ENCODE measurements at regions of chr11 and their contacts with region 1.

Region 1: DNA sequence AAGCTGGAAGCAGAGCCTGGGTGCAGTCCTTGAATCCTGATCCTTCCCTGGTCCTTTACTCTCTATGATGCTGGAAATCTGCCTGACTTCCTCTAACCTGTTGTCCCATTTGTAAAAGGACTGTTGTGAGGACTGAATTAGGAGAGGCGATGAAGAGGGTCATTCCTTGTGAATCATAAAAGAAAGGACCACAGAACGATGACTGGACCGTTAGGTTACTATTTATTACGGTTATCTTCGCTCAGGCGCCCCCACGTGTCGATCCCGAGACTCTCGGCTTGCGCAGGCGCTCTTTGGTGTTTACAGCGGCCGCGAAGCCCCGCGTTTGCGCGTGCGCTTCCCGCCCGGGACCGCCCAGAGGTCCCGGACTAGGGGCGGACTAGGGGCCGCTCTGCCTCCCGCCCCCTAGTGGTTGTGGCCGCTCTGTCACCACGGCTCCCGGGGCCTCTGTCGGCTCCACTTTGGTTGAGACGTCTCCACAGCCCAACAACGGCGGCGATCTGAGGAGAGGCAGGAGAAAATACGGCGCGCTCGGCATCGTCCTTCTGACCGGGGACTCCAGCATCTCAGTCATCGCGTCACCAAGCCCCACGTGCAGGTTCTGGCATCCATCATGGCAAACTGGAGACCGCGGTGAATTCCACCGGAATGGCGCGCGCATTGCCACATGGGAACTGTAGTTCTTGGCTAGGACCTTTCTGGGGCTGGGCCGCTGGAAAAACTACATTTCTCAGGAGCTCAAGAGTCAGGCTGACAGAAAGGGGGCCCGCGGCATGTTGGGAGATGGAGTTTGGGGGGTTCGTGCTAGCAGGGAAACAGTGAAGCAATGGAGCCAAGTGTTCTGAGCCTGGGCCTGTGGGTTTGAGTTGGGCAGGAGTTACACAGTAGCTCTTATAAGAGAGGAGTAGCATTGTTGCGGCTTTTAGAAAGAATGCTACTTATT is at the start of gene STARD10:
- DNase-seq: peak; percentile 99
- total RNA-seq, gene STARD10: 20.4 to 22.1 TPM

Region 2: DNA sequence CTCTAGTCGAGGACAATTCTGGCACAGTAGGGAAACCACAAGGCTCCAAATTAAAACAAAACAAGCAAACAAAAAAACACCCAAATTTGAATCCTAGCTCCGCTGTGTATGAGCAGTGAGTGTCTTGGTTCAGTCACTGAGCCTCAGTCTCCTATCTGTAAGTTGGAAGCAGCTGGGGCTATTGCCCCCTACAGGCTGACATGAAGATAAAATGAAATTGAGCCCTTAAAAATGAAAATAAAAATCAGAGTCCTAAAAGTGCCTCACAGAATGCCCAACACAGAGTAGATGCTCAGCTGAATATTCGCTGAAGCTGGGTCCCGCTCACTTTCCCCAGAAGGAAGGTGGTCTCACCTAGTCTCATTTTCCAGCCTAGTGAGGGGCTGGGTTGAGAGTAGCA is 184.7 kb before region 1 on chr11:
- intact Hi-C with region 1: no loop called
- DNase-seq: no peak

Region 3: GRCh38 chr11:72722050-72722748 is 71.5 kb before region 1 on chr11:
- intact Hi-C with region 1: loop called (anchors 5 kb)
- DNase-seq: peak; percentile 96